HCT116 (cell line): ENCODE measurements at regions of chr10 and their contacts with region 1.

Region 1: DNA sequence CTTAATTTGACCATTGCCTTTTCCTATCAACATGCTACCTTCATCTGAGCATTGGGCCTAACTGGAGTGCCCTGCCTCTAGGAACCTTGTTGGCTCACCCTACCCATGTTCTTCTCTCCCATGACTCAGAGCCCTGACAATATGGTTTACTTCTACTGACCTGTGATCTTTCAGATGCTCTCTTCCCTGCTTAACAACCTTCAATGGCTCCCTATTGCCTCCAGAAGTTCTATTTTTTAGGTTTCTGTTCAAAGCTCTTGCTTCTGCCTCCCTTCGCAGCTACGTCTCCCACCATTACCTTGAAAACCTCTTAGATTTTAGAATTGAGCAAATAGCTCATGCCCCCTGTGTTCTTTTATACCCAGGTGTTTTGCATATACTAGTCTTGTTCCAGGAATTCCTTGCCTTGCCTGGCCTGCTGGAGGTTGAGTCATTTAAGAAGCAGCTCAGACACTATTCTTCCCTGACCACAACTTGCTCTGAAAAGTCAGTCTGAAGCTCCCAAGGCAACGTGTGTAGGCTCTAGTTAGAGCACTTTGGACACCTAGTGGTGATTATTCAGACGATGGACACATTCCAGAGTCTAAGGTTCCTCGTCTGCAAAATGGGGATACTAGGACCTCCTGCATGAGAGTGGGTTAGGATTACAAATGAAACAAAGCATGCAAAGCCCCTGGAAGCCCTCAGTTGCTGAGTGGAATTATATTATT is 64.4 kb upstream of the EMX2 start:
- DNase-seq: peak; percentile 83
- ATAC-seq: peak; percentile 90
- H3K4me3 ChIP-seq: no peak overlapping the region
- H3K27ac ChIP-seq: no peak overlapping the region
- H3K4me1 ChIP-seq: peaks cover 0 to 10% of the 10 kb centered on the region in 2 experiments; a peak in 2 of 4 replicates
- H3K27me3 ChIP-seq: no peaks in the 10 kb centered on the region
- CTCF ChIP-seq: peak; percentile 55 to 81 (median 61)
- POLR2A ChIP-seq: no peak
- RAD21 ChIP-seq: peak; percentile 83

Region 2: GRCh38 chr10:117053482-117053881 is 424.6 kb before region 1 on chr10:
- CTCF ChIA-PET with region 1: no interaction called
- POLR2A ChIA-PET with region 1: no interaction called
- RAD21 ChIA-PET with region 1: no interaction called
- intact Hi-C with region 1: no loop called
- DNase-seq: no peak
- ATAC-seq: no peak
- H3K4me3 ChIP-seq: no peak overlapping the region
- H3K27ac ChIP-seq: no peak overlapping the region
- H3K4me1 ChIP-seq: no peaks in the 10 kb centered on the region
- H3K27me3 ChIP-seq: no peaks in the 10 kb centered on the region
- CTCF ChIP-seq: no peak
- POLR2A ChIP-seq: no peak
- RAD21 ChIP-seq: no peak

Region 3: DNA sequence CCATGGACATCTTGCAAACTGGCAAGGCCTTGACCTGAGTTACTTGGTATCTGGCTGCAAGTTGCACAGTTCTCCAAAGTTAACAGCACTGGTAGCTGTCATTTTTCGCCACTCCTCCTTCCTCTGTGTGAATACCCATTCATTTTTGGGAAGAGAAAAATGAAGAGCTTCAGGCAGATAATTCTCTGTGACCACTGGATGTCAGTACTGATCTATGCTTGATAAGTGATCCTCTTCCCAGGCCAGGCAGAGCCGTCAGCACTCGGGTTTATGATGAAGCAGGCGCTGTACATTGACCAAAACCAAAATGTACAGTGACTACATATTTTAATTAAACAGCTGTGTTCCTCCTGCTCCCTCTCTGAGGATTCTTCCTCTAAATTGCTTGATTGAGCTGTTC is 47.0 kb before region 1 on chr10:
- CTCF ChIA-PET with region 1: interaction called, 12 read pairs
- POLR2A ChIA-PET with region 1: no interaction called
- RAD21 ChIA-PET with region 1: interaction called in 1 of 2 experiments, 3 read pairs
- intact Hi-C with region 1: no loop called
- DNase-seq: peak; percentile 28
- ATAC-seq: peak; percentile 58
- H3K4me3 ChIP-seq: no peak overlapping the region
- H3K27ac ChIP-seq: no peak overlapping the region
- H3K4me1 ChIP-seq: no peaks in the 10 kb centered on the region
- H3K27me3 ChIP-seq: peaks cover 18% of the 10 kb centered on the region; the same call in 1 of the 2 replicates
- CTCF ChIP-seq: peak in 2 of 3 experiments; percentile 34 to 37; a peak in 2 of 6 replicates
- POLR2A ChIP-seq: no peak
- RAD21 ChIP-seq: peak; percentile 58

Region 4: DNA sequence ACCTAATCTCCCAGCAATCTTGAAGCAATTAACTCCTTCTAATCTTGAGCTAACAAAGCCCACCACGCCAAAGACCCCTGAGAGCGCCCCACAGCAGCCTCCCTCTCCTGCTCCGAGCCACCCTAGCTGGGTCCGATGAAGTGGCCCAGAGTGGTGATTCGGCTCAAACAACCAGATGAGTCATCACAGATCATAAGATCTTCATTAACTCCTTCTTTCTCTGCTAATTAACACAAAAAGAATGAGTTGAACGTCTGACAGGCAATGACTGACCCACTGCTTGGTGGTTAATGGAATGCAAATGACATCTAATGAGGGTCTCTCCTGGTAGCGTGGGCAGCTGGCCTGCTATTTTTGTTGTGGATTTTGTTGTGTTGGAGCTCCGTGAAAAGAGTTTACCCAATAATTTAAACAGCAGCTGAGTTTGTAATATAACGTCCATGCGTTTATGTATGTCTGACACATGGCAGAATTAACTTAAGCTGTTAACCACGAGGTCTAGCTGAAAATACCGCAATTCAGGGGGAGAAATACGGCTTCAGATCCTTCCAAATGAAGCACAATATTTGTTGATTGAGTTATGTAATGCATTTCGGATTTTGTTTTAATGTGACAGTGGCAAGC is 407.2 kb after region 1 on chr10:
- CTCF ChIA-PET with region 1: no interaction called
- POLR2A ChIA-PET with region 1: no interaction called
- RAD21 ChIA-PET with region 1: no interaction called
- intact Hi-C with region 1: no loop called
- DNase-seq: no peak
- ATAC-seq: no peak
- H3K4me3 ChIP-seq: no peak overlapping the region
- H3K27ac ChIP-seq: no peak overlapping the region
- H3K4me1 ChIP-seq: no peaks in the 10 kb centered on the region
- H3K27me3 ChIP-seq: peaks cover 49% of the 10 kb centered on the region
- CTCF ChIP-seq: no peak
- POLR2A ChIP-seq: no peak
- RAD21 ChIP-seq: no peak

Region 5: GRCh38 chr10:118626953-118627352 is 1148.8 kb after region 1 on chr10:
- CTCF ChIA-PET with region 1: no interaction called
- POLR2A ChIA-PET with region 1: no interaction called
- RAD21 ChIA-PET with region 1: no interaction called
- intact Hi-C with region 1: no loop called
- DNase-seq: no peak
- ATAC-seq: peak; percentile 70
- H3K4me3 ChIP-seq: no peak overlapping the region
- H3K27ac ChIP-seq: no peak overlapping the region
- H3K4me1 ChIP-seq: no peaks in the 10 kb centered on the region
- H3K27me3 ChIP-seq: peaks cover 57% of the 10 kb centered on the region
- CTCF ChIP-seq: peak in 2 of 3 experiments; percentile 54 to 65; a peak in 4 of 6 replicates
- POLR2A ChIP-seq: no peak
- RAD21 ChIP-seq: no peak